Dendritic cell treated with granulocyte-macrophage colony-stimulating factor and Interleukin-4, amounts not matched to agents 40 ng/mL and 50 ng/mL, for 4 days (primary cell): ENCODE measurements at regions of chr11 and their contacts with region 1.

Region 1: DNA sequence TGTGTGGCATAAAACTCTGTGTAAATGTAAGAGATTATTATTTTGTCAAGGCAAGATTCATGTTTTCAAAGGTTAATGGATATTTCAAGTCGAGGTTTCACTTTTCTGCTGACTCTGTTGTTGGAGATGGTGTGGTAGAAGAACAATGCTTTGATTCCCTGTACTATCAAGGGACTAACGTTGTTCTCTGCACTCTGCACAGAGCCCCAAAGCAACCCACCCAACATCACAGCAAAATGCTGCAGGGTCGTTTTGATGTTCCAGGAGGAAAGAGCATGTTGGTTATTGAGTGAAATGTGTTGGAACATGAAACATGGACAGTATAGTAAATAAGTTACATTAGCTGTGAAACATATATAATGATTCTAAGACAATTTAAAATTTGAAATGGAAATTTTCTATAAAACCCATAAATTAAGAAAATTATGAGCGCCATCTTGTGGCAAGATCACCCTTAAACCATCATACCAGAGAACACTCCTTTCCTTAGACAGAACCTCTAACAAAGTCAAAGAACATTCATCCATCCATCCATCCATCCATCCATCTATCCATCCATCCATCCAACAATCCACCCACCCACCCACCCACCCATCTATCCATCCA is 164.4 kb upstream of the ZBED5 start:
- H3K4me3 Mint-ChIP-seq: no peak overlapping the region
- H3K27ac Mint-ChIP-seq: no peak overlapping the region
- H3K4me1 Mint-ChIP-seq: peaks cover 33% of the 10 kb centered on the region
- H3K27me3 Mint-ChIP-seq: peaks cover 6% of the 10 kb centered on the region

Region 2: GRCh38 chr11:10792398-10792975 is 229.7 kb before region 1 on chr11:
- intact Hi-C with region 1: loop called (anchors 2 kb)
- H3K4me3 Mint-ChIP-seq: no peak overlapping the region
- H3K27ac Mint-ChIP-seq: no peak overlapping the region
- H3K4me1 Mint-ChIP-seq: peaks cover 21% of the 10 kb centered on the region
- H3K27me3 Mint-ChIP-seq: peaks cover 17% of the 10 kb centered on the region

Region 3: DNA sequence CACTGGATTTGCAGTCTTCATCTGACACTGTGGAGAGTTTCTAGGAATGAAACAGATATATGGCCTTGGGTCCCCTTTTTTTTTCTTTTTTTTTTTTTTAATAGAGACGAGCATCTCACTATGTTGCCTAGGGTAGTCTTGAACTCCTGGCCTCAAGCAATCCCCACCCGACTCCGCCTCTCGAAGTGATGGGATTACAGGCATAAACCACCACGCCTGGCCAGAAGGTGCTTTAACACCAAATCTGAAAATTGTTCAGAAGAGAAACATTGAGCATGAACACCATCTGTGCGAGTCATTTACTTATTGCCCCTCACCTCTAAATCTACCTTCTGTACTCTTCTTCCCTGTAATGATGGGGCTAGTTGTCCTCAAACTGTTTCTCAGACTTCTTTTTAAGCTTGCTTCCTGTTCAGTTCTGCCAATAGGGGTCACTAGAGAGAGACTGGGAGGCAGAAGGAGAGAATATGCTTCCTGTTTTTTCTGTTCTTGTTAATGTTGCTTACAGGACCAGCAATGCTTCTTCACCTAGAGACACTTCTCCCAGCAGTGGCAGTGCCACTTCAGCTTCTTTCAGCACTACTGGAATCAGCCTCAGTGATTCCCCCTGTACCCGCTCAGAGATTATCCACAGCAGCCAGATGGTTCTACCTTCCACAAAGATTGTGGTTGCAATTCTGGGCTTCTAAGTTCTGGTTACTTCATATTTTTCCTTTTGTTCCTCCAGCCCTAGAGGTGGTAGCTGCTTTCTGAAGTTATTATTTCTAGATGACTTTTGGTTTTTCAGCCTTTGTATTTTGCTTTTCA is 143.6 kb before region 1 on chr11:
- intact Hi-C with region 1: loop called (anchors 5 kb)
- H3K4me3 Mint-ChIP-seq: no peak overlapping the region
- H3K27ac Mint-ChIP-seq: peak overlapping the region; percentile 48
- H3K4me1 Mint-ChIP-seq: peaks cover 28% of the 10 kb centered on the region
- H3K27me3 Mint-ChIP-seq: no peaks in the 10 kb centered on the region

Region 4: DNA sequence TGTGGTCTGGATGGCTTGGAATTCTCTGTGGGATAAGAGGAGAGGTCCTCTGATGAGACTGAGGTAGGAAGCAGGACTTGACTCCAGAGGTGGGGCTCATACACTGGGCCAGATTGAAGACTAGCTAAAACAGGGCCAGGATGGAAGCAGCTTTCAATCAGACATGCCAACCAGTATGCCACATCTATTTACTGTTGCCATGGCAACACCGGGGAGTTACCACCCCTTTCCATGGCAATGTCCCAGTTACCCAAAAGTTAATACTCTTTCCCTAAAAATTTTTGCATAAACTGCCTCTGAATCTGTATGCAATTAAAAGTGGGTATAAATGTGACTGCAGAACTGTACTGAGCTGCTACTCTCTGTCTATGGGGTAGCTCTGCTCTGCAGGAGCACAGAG is 83.1 kb after region 1 on chr11:
- intact Hi-C with region 1: no loop called
- H3K4me3 Mint-ChIP-seq: no peak overlapping the region
- H3K27ac Mint-ChIP-seq: no peak overlapping the region
- H3K4me1 Mint-ChIP-seq: peaks cover 5% of the 10 kb centered on the region
- H3K27me3 Mint-ChIP-seq: peaks cover 30% of the 10 kb centered on the region